PC-3 (cell line): ENCODE measurements at regions of chr19 and their contacts with region 1.

Region 1: DNA sequence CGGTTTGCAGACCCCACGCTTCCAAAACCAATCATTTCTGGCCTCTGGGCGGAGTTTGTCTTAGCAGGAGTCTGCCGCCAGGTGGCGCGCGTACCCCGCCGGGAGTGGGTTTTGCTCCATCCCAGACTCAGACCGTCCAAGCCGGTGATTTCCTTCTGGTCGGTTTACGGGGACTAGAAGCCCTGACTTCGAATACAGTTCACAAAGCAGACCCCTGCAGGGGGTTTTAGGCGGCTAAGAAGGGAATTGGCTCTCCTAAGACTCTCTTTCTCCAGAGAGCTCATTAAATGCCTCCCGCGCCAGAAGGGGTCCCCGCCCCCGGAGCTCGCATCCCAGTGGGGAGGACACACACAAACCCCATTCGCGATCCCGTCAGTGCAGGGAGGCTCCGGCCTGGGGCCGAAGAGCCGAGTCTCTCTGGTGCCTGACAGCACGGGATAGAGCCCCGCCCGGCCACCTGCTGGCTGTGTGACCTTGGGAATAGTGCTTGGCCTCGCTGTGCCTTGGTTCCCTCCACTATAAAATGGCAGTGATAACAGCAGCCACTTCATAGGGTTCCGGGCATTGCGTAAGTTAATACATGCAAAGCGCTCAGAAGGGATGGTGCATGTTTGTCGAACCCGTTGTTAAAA is 8.6 kb upstream of the NUP62 start:
- DNase-seq: peak; percentile 88
- ATAC-seq: peak; percentile 93
- H3K4me3 ChIP-seq: peak overlapping the region; percentile 58
- H3K27ac ChIP-seq: no peak overlapping the region
- H3K4me1 ChIP-seq: peaks cover under 1% of the 10 kb centered on the region
- H3K27me3 ChIP-seq: no peaks in the 10 kb centered on the region
- CTCF ChIP-seq: peak; percentile 98

Region 2: GRCh38 chr19:49823472-49823871 is 114.4 kb before region 1 on chr19:
- CTCF ChIA-PET with region 1: no interaction called
- POLR2A ChIA-PET with region 1: no interaction called
- intact Hi-C with region 1: no loop called
- DNase-seq: no peak
- ATAC-seq: no peak
- H3K4me3 ChIP-seq: no peak overlapping the region
- H3K27ac ChIP-seq: no peak overlapping the region
- H3K4me1 ChIP-seq: peaks cover 5% of the 10 kb centered on the region
- H3K27me3 ChIP-seq: no peaks in the 10 kb centered on the region
- CTCF ChIP-seq: no peak

Region 3: DNA sequence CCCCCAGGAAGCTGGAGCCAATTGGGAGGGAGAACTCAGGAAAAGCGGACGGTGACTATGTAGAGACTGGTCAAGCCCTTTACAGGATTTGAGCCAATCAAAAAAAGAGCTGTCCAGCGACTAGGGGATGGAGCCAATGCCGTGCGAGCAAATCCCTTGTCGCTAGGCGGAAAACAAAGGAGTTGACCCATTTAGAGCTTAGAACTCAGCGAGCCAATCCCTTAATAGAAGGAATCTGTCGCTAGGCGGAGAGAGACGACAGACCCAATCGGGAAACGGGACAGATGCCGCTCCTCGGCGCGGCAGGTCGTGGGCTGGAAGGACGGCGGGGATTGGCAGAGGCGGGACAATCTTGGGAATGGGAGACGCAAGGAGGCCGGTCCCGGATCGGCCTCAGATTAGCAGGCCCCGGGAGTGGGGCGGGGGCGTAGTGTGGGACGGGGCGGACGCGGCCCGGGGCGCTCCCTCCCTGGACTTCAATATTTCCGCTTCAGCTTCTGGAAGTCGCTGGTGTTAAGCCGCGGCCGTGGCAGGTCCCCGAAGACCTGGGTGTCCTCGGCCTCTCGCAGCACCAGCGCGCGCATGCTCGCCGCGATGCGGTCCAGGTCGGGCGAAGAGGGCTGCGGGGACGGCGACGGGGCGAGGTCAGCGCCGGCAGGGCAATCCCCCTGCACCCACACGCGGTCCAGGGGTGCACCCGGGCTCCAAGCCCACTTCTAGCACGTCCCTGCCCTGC is 68.3 kb before region 1 on chr19:
- CTCF ChIA-PET with region 1: no interaction called
- POLR2A ChIA-PET with region 1: no interaction called
- intact Hi-C with region 1: no loop called
- DNase-seq: peak; percentile 100
- ATAC-seq: peak; percentile 72
- H3K4me3 ChIP-seq: peak overlapping the region; percentile 68
- H3K27ac ChIP-seq: peak overlapping the region; percentile 23
- H3K4me1 ChIP-seq: peaks cover 29% of the 10 kb centered on the region
- H3K27me3 ChIP-seq: no peaks in the 10 kb centered on the region
- CTCF ChIP-seq: no peak

Region 4: GRCh38 chr19:49983645-49984229 is 45.9 kb after region 1 on chr19:
- CTCF ChIA-PET with region 1: no interaction called
- POLR2A ChIA-PET with region 1: no interaction called
- intact Hi-C with region 1: loop called (anchors 5 kb)
- DNase-seq: peak; percentile 76
- ATAC-seq: 0 out of 2 replicates have a peak, but pooled peaks have one; percentile 16
- H3K4me3 ChIP-seq: no peak overlapping the region
- H3K27ac ChIP-seq: no peak overlapping the region
- H3K4me1 ChIP-seq: peaks cover 8% of the 10 kb centered on the region
- H3K27me3 ChIP-seq: no peaks in the 10 kb centered on the region
- CTCF ChIP-seq: peak; percentile 98